Colonic mucosa (tissue), 4 donors: ENCODE measurements at regions of chr4 and their contacts with region 1.

Region 1: GRCh38 chr4:183261953-183262775 is 57.9 kb downstream of the CLDN22 start:
- DNase-seq: peak; percentile 87
- H3K4me3 ChIP-seq: no peak overlapping the region
- H3K27ac ChIP-seq: peak overlapping the region; percentile 30
- H3K4me1 ChIP-seq: no peaks in the 10 kb centered on the region
- H3K27me3 ChIP-seq: no peaks in the 10 kb centered on the region
- CTCF ChIP-seq: peak; percentile 70

Region 2: GRCh38 chr4:182486881-182487280 is 775.3 kb before region 1 on chr4:
- intact Hi-C with region 1: loop called (anchors 10 kb)
- DNase-seq: no peak
- H3K4me3 ChIP-seq: no peak overlapping the region
- H3K27ac ChIP-seq: no peak overlapping the region
- H3K4me1 ChIP-seq: no peaks in the 10 kb centered on the region
- H3K27me3 ChIP-seq: no peaks in the 10 kb centered on the region
- CTCF ChIP-seq: no peak

Region 3: DNA sequence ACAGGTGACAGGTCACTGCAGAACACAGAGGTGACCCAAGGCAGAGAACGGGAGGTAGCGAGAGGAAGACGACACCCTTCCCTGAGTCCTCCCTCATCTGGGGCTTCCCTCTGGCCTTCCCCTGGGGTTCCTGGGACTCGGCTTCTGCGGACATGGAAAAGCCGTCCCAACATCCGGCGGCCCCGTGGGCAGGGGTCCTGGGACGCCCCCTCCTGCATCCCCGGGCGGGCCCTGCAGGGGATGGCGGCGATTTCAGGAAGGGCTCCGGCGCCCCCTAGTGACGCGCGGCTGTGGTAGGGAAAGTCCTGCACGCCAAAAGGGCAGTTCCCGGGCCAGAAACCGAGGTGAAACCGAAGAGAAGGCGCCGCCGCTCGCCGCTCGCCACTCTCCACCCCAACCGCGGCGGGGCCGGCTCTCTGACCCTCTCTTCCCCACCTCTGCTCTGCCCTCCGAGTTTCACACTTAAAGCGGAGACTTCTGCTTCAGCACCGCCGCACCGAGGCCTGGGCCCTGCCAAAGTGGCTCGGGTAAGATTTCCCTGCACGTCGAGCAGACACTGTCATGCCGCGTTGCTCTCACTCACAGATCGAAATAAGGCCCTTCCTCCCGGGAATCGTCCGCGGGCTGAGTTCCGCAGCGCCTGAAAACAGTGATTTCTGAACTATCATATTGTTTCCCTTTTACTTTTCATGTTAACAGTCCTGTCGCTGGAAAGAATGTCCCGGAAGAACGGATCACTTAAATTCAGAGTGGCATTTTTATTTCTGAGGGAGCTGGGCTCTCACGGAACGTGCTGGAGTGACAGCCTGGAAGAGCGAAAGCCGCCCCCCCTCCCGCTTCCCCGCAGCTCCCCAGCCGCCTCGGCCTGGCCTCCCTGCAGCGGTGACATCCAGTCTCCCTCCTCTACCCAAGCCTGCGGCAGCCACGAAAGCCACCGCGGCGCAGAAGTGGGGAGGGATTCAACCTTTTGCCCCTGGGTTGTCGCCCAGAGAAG is 455.6 kb before region 1 on chr4:
- intact Hi-C with region 1: loop called (anchors 10 kb)
- DNase-seq: peak; percentile 74
- H3K4me3 ChIP-seq: peak overlapping the region; percentile 23
- H3K27ac ChIP-seq: no peak overlapping the region
- H3K4me1 ChIP-seq: no peaks in the 10 kb centered on the region
- H3K27me3 ChIP-seq: no peaks in the 10 kb centered on the region
- CTCF ChIP-seq: peak; percentile 68

Region 4: GRCh38 chr4:182938205-182938645 is 323.9 kb before region 1 on chr4:
- intact Hi-C with region 1: loop called (anchors 2 kb)
- DNase-seq: peak; percentile 82
- H3K4me3 ChIP-seq: no peak overlapping the region
- H3K27ac ChIP-seq: no peak overlapping the region
- H3K4me1 ChIP-seq: no peaks in the 10 kb centered on the region
- H3K27me3 ChIP-seq: no peaks in the 10 kb centered on the region
- CTCF ChIP-seq: peak; percentile 85

Region 5: DNA sequence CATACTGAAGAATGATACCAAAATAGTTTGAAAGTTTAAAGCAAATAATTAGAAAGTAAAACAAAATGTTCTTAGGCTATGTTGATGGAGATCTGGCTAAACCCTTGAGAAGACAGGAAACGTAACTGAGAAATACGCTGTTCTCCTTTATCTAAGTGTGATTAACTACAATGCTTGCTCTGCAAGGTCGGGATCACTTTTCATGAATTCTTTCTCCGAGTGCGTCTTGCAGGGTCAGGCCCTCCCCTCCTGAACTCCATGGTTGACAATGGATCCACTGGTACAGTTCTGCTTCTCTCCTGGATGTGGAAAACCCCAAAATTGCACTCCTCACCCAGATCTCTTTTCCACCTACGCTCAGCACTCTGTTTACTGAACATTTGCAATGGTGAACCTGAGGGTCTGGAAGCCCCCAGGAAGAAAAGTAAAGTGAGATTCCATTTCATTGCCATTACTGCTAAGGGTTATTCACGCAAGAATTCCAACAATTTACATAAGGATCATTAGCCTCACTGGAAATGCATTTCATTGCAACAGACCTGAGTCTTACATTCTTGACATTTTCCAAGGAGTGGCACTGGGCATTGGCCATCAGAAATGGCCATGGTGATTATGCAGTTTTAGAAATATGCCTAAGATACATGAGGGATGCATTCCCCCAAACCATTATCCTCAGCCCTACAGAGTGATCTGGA is 187.7 kb before region 1 on chr4:
- intact Hi-C with region 1: loop called (anchors 2 kb)
- DNase-seq: no peak
- H3K4me3 ChIP-seq: no peak overlapping the region
- H3K27ac ChIP-seq: no peak overlapping the region
- H3K4me1 ChIP-seq: no peaks in the 10 kb centered on the region
- H3K27me3 ChIP-seq: no peaks in the 10 kb centered on the region
- CTCF ChIP-seq: no peak

Region 6: DNA sequence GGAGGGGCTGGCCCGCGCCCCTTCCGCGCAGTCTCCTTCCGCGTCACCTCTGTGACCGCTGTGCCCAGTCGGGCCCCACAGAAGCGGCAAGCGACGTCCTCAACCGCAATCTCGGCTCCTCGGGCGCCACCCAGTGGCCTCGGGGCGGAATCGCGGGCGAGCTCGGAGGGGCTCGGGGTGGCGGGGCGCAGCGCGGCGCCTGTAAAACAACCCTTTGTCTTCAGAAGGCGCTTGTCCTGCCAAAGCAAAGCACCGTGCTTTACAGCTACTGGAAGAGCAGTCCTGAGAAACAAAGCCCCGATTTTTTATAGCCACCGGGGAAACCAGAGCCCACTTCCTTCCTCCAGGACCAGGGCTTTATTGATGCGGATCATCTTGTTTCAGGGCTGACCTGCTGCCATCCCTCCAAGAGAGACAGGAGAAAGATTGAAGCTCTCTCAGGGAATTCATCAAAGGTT is 145.0 kb after region 1 on chr4:
- intact Hi-C with region 1: loop called (anchors 10 kb)
- DNase-seq: peak; percentile 91
- H3K4me3 ChIP-seq: peak overlapping the region; percentile 45
- H3K27ac ChIP-seq: peak overlapping the region; percentile 65
- H3K4me1 ChIP-seq: no peaks in the 10 kb centered on the region
- H3K27me3 ChIP-seq: no peaks in the 10 kb centered on the region
- CTCF ChIP-seq: peak; percentile 99

Region 7: GRCh38 chr4:183458005-183458404 is 195.8 kb after region 1 on chr4:
- intact Hi-C with region 1: no loop called
- DNase-seq: no peak
- H3K4me3 ChIP-seq: no peak overlapping the region
- H3K27ac ChIP-seq: no peak overlapping the region
- H3K4me1 ChIP-seq: no peaks in the 10 kb centered on the region
- H3K27me3 ChIP-seq: no peaks in the 10 kb centered on the region
- CTCF ChIP-seq: no peak

Region 8: GRCh38 chr4:183686461-183686860 is 424.3 kb after region 1 on chr4:
- intact Hi-C with region 1: no loop called
- DNase-seq: no peak
- H3K4me3 ChIP-seq: no peak overlapping the region
- H3K27ac ChIP-seq: no peak overlapping the region
- H3K4me1 ChIP-seq: no peaks in the 10 kb centered on the region
- H3K27me3 ChIP-seq: no peaks in the 10 kb centered on the region
- CTCF ChIP-seq: no peak